ENCODE measurements at regions of chr1 and their contacts with region 1.

Region 1: GRCh38 chr1:192808518-192809306 is at the start of gene RGS2:
- DNase-seq: peak; percentile 94
- H3K4me3 ChIP-seq: peak within 1 kb of the TSS; percentile 81
- H3K27ac ChIP-seq: peak within 1 kb of the TSS; percentile 56
- H3K4me1 ChIP-seq: peaks cover 36% of the 10 kb centered on the region
- CTCF ChIP-seq: peak; percentile 26; the same call in 1 of the 2 replicates
- total RNA-seq, gene RGS2: 26.5 and 27.6 TPM in 2 replicates

Region 2: DNA sequence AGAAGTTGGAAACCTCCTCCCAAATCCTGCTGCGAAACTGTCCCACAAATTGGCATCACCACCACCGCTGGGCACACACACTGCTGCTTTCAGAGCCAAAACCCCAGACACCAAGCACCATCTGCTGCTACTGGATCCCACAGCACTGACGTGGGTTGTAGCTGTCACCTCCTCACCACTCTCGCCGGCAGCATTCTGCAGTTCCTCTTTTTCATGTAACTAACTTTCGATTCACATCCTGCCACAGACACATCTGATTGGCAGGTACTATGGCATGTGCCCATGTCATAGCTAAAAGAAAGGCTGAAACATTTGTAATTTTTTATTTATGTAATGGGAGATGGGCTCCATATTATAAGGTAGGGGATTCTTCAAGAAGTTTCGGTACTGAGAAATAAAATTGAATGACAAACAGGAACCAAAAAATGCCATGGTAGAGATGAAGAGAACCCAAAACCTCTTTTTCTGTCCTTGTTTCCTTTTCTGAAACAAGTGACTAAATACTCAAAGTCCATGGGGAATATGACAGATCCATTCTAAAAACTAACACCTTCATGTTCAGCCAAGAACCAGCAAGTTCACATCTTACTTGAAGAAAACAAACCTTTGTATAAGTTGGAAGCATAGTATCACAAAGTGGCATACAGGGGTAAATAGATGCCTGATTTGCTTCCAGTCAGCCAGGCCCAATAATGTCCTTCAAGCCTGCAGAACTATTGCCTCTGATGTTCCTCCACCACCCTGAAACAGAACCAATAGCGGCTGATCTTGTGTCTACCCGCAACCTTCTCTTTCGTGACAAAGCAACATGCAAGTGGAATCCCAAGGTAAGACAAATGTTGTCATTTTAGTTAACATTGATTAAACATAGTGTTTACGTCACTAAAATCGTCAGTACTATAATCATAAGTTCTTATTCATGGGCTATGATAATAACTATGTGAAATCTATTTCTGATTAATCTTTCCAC is 199.3 kb before region 1 on chr1:
- CTCF ChIA-PET with region 1: no interaction called
- POLR2A ChIA-PET with region 1: interaction called, 9 read pairs
- intact Hi-C with region 1: loop called (anchors 2 kb)
- DNase-seq: peak; percentile 93
- H3K4me3 ChIP-seq: peak overlapping the region; percentile 35
- H3K27ac ChIP-seq: peak overlapping the region; percentile 76
- H3K4me1 ChIP-seq: peaks cover 70% of the 10 kb centered on the region
- CTCF ChIP-seq: peak; percentile 37; the same call in 1 of the 2 replicates

Region 3: DNA sequence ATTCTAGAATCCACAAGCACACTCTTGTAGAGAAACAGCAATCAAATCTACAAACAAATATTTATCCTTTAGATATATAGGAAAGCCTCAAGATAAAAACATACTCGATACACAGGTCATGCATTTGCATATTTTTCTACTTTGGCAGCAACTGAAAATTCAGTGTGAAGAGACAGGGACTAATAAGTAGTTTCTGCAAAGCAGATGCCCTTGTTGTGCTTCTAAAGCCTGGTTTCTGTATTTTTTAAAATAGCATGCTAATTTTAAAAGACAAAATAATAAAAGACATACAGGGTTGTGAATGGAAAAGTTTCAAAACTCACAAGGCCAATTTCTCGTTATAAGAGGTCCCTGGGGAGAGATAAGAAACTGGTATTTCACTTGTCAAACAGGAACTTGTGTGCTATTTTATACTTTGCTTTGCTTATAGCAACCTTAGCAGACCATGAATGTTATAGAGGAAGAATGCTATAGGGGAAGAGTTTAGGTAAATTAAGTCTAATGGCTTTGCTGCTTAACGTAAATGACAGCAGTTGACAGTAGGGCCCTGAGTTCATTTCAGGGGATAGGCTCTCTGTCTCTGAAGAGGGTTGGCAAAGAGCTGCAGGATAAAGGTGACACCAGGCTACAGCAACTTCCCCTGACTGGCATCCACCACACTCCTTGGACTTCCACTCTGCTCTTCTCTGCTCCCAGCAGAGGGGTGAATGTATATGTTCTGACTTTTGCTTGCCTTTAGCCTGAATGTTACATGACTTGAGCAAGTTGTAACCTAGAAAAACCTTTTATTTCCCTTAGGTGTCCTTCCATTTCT is 182.1 kb before region 1 on chr1:
- CTCF ChIA-PET with region 1: no interaction called
- POLR2A ChIA-PET with region 1: interaction called, 11 read pairs
- intact Hi-C with region 1: no loop called
- DNase-seq: peak; percentile 94
- H3K4me3 ChIP-seq: peak overlapping the region; percentile 66
- H3K27ac ChIP-seq: peak overlapping the region; percentile 100
- H3K4me1 ChIP-seq: peaks cover 67% of the 10 kb centered on the region
- CTCF ChIP-seq: no peak

Region 4: GRCh38 chr1:193019442-193020026 is 210.8 kb after region 1 on chr1:
- CTCF ChIA-PET with region 1: interaction called, 3 read pairs
- POLR2A ChIA-PET with region 1: interaction called, 9 read pairs
- intact Hi-C with region 1: loop called (anchors 5 kb)
- DNase-seq: peak; percentile 60
- H3K4me3 ChIP-seq: no peak overlapping the region
- H3K27ac ChIP-seq: no peak overlapping the region
- H3K4me1 ChIP-seq: no peaks in the 10 kb centered on the region
- CTCF ChIP-seq: peak; percentile 84

Region 5: GRCh38 chr1:193121616-193122593 is 313.2 kb after region 1 on chr1 and contains the start of gene CDC73:
- CTCF ChIA-PET with region 1: no interaction called
- POLR2A ChIA-PET with region 1: interaction called, 7 read pairs
- intact Hi-C with region 1: loop called (anchors 1 kb)
- DNase-seq: peak; percentile 96
- H3K4me3 ChIP-seq: peak within 1 kb of the TSS; percentile 92
- H3K27ac ChIP-seq: peak within 1 kb of the TSS; percentile 95
- H3K4me1 ChIP-seq: peaks cover 25% of the 10 kb centered on the region
- CTCF ChIP-seq: peak; percentile 78
- total RNA-seq, gene CDC73: 12.9 and 25.9 TPM in 2 replicates

Measured in OCI-LY7 (cell line).